ENCODE measurements at regions of chr15 and their contacts with region 1.

Region 1: GRCh38 chr15:20344601-20345400 is 196.8 kb downstream of the GOLGA6L6 start:
- DNase-seq: peak; percentile 19 to 49
- H3K4me3 ChIP-seq: no peak overlapping the region
- H3K27ac ChIP-seq: no peak overlapping the region
- H3K4me1 ChIP-seq: no peaks in the 10 kb centered on the region
- H3K27me3 ChIP-seq: peaks cover 5 to 9% of the 10 kb centered on the region in 2 donors
- CTCF ChIP-seq: no peak
- POLR2A ChIP-seq: no peak

Region 2: DNA sequence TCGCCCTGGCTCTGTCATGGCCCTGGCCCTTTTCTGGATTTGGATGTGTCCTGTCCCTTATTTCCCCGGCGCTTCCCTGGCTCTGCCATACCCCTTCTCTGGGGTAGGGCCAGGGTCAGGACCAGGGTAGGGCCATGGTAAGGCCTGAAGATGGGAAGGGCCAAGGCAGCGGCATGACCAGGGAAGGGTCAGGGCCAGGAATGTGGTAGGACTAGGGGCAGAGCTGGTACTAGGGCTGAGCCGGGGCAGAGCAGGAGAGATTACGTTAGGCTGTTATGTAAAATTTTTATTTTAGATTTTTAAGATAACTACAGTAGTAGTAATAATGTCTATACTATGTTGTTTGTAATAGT is 39.8 kb before region 1 on chr15:
- intact Hi-C with region 1: no loop called
- DNase-seq: peak in 1 of 2 donors; percentile 12
- H3K4me3 ChIP-seq: no peak overlapping the region
- H3K27ac ChIP-seq: no peak overlapping the region
- H3K4me1 ChIP-seq: no peaks in the 10 kb centered on the region
- H3K27me3 ChIP-seq: no peaks in the 10 kb centered on the region
- CTCF ChIP-seq: no peak
- POLR2A ChIP-seq: no peak

Region 3: GRCh38 chr15:20368974-20369373 is 24.2 kb after region 1 on chr15:
- intact Hi-C with region 1: loop called (anchors 1 kb)
- DNase-seq: no peak
- H3K4me3 ChIP-seq: no peak overlapping the region
- H3K27ac ChIP-seq: no peak overlapping the region
- H3K4me1 ChIP-seq: no peaks in the 10 kb centered on the region
- H3K27me3 ChIP-seq: no peaks in the 10 kb centered on the region
- CTCF ChIP-seq: no peak
- POLR2A ChIP-seq: no peak

Region 4: DNA sequence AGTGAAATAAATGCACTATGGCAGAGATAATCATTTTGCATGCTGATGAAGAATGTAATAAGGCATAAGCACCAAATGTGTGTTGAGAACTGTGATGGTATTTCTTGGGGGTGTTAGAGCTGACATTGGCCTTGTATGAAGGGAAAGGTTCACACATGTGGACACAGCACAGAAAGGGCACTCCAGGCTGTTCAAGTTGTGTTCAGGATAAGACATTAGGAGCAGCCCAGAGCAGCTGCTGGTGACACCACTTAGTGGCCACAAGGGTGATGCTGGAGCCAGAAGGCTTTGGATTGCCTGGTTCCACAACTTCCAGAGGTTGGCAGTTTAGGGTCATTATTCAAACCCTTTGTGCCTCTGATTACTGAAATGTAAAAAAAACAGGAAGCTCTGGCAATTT is 41.4 kb after region 1 on chr15:
- intact Hi-C with region 1: no loop called
- DNase-seq: no peak
- H3K4me3 ChIP-seq: no peak overlapping the region
- H3K27ac ChIP-seq: no peak overlapping the region
- H3K4me1 ChIP-seq: no peaks in the 10 kb centered on the region
- H3K27me3 ChIP-seq: no peaks in the 10 kb centered on the region
- CTCF ChIP-seq: no peak
- POLR2A ChIP-seq: no peak